ENCODE measurements at regions of chr19 and their contacts with region 1.

Region 1: DNA sequence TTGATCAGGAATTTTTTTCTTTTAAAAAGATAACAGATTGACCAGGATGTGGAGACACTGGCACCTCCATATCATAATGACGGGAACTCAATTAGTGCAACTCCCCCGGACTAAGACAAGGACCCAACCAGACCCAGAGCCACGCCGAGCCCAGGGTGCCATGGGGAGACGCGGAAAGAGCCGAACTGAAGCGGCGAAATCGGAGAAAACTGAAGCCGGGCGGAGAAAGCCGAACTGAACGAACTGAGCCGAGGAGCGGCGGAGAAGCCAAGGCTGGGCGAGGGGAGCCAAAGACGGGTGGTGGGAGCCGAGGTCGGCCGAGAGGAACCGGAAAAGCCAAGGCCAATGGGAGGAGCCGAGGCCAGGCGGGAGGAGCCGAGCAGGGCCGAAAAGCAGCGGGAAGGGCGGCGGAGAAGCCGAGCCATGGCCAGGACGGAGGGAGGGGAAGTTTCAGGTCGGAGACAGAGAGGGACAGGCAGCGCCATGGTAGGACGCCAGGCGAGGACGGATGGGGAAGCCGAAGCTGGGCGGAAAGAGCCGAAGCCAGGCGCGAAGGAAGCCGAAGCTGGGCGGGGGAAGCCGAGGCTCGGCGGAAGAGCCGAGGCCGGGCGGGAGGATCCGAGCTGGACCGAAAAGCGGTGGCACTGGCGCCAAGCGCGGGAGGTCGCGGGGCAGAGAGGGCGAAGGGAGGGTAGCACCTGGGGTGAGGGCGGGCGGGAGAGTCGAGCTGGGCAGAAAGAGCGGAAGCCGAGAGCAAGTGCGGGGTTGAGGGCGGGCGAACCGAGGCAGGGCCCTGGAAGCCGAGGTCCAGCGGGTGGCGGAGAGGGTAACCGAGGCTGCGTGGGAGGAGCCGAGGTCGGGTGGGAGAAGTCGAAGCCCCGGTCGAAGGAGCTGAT is 29.4 kb downstream of the ZNF557 start:
- DNase-seq: peak; percentile 84
- ATAC-seq: peak; percentile 95
- H3K4me3 ChIP-seq: peak overlapping the region; percentile 76
- H3K27ac ChIP-seq: peak overlapping the region; percentile 75
- H3K4me1 ChIP-seq: peaks cover 4% of the 10 kb centered on the region; the same call in 1 of the 2 replicates
- H3K27me3 ChIP-seq: no peaks in the 10 kb centered on the region
- CTCF ChIP-seq: no peak
- EP300 ChIP-seq: no peak
- POLR2A ChIP-seq: peak; percentile 90
- RAD21 ChIP-seq: no peak

Region 2: DNA sequence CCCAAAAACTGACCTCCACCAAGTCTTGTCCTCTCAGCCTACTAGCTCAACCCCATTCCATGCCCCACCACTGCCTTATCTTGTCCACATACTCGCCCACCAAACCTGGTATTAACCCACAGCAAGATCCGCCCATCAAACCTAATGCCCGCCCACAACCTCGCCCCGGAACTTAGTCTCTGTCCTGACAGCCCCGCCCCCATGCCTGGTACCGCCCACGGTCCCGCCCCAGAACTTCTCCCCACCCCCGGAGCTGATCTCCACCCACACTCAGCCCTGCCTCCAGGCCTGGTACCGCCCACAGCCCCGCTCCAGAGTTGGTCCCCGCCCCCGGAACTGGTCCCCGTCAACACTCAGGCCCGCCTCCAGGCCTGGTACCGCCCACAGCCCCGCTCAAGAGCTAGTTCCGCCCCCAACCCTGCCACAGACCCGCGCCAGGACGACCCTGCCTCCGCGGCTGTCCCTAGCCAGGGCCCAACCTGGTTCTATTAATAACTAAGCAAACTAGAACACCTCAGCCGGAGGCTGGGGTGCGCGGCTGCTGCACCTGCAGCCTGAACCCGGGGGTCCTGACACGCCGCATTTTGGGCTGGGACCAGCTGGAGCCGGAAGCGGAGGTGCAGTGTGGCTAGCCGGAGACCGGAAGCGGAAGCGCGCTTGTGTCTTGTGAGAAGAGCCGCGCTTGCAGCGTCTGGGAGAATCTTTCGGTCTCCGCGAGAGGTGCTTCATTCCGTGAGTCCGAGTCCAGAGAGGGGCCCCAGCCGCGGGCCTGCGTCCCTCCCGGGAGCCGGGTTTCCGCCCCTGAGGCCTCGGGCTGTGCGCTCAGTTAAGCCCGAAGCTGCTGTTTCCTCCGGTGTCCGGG is 29.7 kb before region 1 on chr19 and contains the start of gene ZNF557:
- CTCF ChIA-PET with region 1: interaction called, 6 read pairs
- POLR2A ChIA-PET with region 1: interaction called, 14 read pairs
- RAD21 ChIA-PET with region 1: interaction called, 15 read pairs
- SMC1A ChIA-PET with region 1: interaction called, 8 read pairs
- in situ Hi-C with region 1: no loop called
- intact Hi-C with region 1: no loop called
- DNase-seq: peak; percentile 88
- ATAC-seq: peak; percentile 99
- H3K4me3 ChIP-seq: peak within 1 kb of the TSS; percentile 91
- H3K27ac ChIP-seq: peak within 1 kb of the TSS; percentile 84
- H3K4me1 ChIP-seq: no peaks in the 10 kb centered on the region
- H3K27me3 ChIP-seq: no peaks in the 10 kb centered on the region
- CTCF ChIP-seq: no peak
- EP300 ChIP-seq: no peak
- POLR2A ChIP-seq: peak; percentile 91
- RAD21 ChIP-seq: no peak
- polyA plus RNA-seq, gene ZNF557: 5.0 to 5.5 TPM

Region 3: GRCh38 chr19:7115721-7116120 is 16.8 kb after region 1 on chr19:
- CTCF ChIA-PET with region 1: no interaction called
- POLR2A ChIA-PET with region 1: no interaction called
- RAD21 ChIA-PET with region 1: no interaction called
- SMC1A ChIA-PET with region 1: no interaction called
- in situ Hi-C with region 1: no loop called
- intact Hi-C with region 1: no loop called
- DNase-seq: no peak
- ATAC-seq: no peak
- H3K4me3 ChIP-seq: no peak overlapping the region
- H3K27ac ChIP-seq: no peak overlapping the region
- H3K4me1 ChIP-seq: no peaks in the 10 kb centered on the region
- H3K27me3 ChIP-seq: no peaks in the 10 kb centered on the region
- CTCF ChIP-seq: no peak
- EP300 ChIP-seq: no peak
- POLR2A ChIP-seq: no peak
- RAD21 ChIP-seq: no peak

Region 4: DNA sequence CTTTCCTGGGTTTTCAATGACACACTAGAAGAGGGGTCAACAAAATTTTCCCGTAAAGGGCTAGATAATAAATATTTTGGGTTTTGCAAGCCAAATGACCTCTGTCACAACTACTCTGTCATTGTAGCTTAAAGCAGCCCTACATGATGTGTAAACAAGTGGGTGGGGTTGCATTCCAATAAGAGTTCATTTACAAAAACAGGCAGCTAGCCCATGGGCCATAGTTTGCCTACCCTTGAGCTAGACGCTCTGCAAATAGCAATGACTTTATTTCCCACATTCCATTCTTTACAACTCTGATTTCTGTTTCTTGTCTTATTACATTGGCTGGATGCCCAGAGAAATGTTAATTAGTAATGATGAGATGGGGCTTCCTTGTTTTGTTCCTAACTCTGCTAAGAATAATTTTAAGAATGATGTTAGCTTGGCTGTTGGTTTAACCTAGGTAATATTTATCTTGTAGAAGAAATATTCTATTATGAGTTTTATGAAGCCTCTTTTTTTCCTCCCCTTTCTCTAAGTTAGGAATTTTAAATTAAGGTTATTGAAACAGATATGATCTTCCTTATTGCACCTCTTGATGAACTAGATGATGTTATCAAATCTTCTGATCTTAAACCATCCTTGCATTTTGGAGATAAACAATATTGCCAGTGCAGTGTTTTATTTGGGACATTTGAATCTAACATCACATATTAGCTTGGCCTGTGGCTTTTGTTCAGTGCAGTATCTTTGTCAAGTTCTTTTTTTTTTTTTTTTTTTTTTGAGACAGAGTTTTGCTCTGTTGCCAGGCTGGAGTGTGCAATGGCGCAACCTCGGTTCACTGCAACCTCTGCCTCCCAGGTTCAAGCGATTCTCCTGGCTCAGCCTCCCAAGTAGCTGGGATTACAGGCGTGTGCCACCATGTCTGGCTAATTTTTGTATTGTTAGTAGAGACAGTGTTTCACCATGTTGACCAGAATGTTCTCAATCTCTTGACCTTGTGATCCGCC is 46.8 kb after region 1 on chr19:
- CTCF ChIA-PET with region 1: interaction called, 7 read pairs
- POLR2A ChIA-PET with region 1: no interaction called
- RAD21 ChIA-PET with region 1: interaction called, 3 read pairs
- SMC1A ChIA-PET with region 1: interaction called, 7 read pairs
- in situ Hi-C with region 1: no loop called
- intact Hi-C with region 1: loop called (anchors 2 kb)
- DNase-seq: no peak
- ATAC-seq: no peak
- H3K4me3 ChIP-seq: no peak overlapping the region
- H3K27ac ChIP-seq: no peak overlapping the region
- H3K4me1 ChIP-seq: no peaks in the 10 kb centered on the region
- H3K27me3 ChIP-seq: no peaks in the 10 kb centered on the region
- CTCF ChIP-seq: no peak
- EP300 ChIP-seq: no peak
- POLR2A ChIP-seq: no peak
- RAD21 ChIP-seq: no peak

Region 5: DNA sequence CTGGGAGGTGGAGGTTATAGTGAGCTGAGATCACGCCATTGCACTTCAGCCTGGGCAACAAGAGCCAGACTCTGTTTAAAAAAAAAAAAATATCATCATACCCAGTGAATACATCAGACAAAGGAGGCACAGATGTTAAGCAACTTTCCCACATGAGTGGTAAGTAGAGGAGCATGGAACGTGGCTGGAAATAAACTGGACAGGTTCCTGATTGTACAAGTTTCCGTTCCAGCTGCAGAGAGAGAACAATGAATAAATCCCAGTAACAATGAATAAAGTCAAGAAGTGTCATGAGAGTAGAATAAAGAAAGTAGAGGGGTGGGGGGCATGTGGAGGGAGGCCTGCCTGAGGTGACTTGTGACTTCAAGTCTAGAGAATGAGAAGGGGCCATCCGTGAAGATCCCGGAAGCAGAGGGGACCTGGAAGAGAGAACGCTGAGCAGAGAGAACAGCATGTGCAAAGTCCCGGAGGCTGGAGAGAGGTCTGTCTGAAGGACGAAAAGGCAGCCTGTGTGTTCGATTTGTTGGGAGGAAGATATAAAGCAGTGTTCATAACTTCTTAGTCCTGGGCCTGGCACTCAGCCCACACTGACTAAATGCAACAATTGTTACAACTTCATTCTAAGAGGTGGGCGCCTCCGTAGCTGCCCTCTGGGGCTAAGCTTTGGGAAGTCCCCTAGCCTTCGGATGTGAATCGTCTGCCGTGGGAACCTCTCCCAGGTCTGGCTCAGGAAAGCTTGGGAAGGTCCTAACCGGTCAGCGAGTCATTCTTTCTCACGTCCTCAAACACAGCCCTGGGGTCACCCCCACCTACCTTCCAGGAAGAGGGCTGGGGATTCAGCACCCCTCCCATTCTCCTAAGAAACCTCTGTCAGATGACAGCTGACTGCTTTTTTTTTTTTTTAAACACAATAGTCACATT is 234.5 kb after region 1 on chr19:
- CTCF ChIA-PET with region 1: interaction called, 62 read pairs
- POLR2A ChIA-PET with region 1: no interaction called
- RAD21 ChIA-PET with region 1: interaction called, 22 read pairs
- SMC1A ChIA-PET with region 1: interaction called, 41 read pairs
- in situ Hi-C with region 1: no loop called
- intact Hi-C with region 1: no loop called
- DNase-seq: peak; percentile 92
- ATAC-seq: peak; percentile 60
- H3K4me3 ChIP-seq: no peak overlapping the region
- H3K27ac ChIP-seq: peak overlapping the region; percentile 75
- H3K4me1 ChIP-seq: peaks cover 37% of the 10 kb centered on the region
- H3K27me3 ChIP-seq: no peaks in the 10 kb centered on the region
- CTCF ChIP-seq: no peak
- EP300 ChIP-seq: peak; percentile 9 to 26; a peak in 1 of 4 replicates
- POLR2A ChIP-seq: no peak
- RAD21 ChIP-seq: no peak

Region 6: GRCh38 chr19:7348587-7349230 is 249.8 kb after region 1 on chr19 and contains the start of gene ARHGEF18:
- CTCF ChIA-PET with region 1: interaction called, 14 read pairs
- POLR2A ChIA-PET with region 1: interaction called, 6 read pairs
- RAD21 ChIA-PET with region 1: interaction called, 12 read pairs
- SMC1A ChIA-PET with region 1: interaction called, 10 read pairs
- in situ Hi-C with region 1: loop called (anchors 5 kb)
- intact Hi-C with region 1: no loop called
- DNase-seq: peak; percentile 59
- ATAC-seq: peak; percentile 60
- H3K4me3 ChIP-seq: peak within 1 kb of the TSS; percentile 43; the same call in 1 of the 2 replicates
- H3K27ac ChIP-seq: peak within 1 kb of the TSS; percentile 77
- H3K4me1 ChIP-seq: peaks cover 58% of the 10 kb centered on the region
- H3K27me3 ChIP-seq: no peaks in the 10 kb centered on the region
- CTCF ChIP-seq: no peak
- EP300 ChIP-seq: peak in 1 of 2 experiments; percentile 36; a peak in 1 of 4 replicates
- POLR2A ChIP-seq: peak; percentile 72; the same call in 1 of the 2 replicates
- RAD21 ChIP-seq: no peak
- polyA plus RNA-seq, gene ARHGEF18: 0.31 to 0.57 TPM

Region 7: GRCh38 chr19:7386308-7386707 is 287.4 kb after region 1 on chr19:
- CTCF ChIA-PET with region 1: interaction called, 28 read pairs
- POLR2A ChIA-PET with region 1: interaction called, 9 read pairs
- RAD21 ChIA-PET with region 1: interaction called, 10 read pairs
- SMC1A ChIA-PET with region 1: interaction called, 3 read pairs
- in situ Hi-C with region 1: no loop called
- intact Hi-C with region 1: no loop called
- DNase-seq: no peak
- ATAC-seq: peak; percentile 65
- H3K4me3 ChIP-seq: no peak overlapping the region
- H3K27ac ChIP-seq: peak overlapping the region; percentile 78
- H3K4me1 ChIP-seq: peaks cover 18% of the 10 kb centered on the region
- H3K27me3 ChIP-seq: no peaks in the 10 kb centered on the region
- CTCF ChIP-seq: peak in 2 of 3 experiments; percentile 14 to 54; a peak in 2 of 6 replicates
- EP300 ChIP-seq: no peak
- POLR2A ChIP-seq: no peak
- RAD21 ChIP-seq: peak; percentile 46

Measured in GM12878 (cell line).